Heart left ventricle (tissue), 16 donors: ENCODE measurements at regions of chr17 and their contacts with region 1.

Region 1: DNA sequence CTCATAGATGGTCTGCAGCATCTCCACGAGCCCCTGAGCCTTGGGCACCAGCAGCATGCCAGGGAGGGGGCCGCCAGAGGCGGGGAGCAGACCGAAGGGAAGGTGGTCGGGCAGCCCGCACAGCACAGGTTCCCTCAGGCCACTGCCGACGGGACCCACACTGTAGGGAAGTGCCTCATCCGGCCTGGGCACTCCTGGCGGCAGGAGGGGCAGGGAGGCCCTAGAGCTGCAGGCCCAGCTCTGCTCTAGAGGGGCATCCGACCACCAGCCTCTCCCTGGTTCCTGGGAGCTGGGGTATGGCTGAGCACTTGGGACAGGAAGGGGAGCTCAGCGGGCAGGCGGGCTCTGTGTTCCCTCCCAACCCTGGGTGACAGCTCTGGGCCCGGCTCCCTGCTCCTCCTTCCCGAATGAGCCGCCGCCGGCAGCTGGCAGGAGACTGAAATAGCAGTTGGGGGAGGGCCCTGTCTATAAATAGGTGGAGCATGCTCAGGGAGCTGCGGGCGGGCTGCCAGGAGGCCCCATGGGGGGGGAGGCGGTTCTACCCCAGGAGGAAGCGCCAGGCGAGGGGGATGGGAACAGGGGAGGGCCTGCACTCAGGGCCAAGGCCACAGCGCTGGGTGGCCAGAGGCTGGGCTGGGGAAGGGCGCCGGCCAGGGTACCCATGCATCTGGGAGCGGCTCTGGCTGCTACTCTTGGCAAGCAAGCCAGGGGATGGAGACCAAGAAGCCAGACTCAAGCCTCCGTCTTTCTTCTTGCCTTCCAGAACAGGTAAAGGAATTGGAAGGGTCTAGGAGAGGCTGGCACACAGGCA is 12.4 kb downstream of the HDAC5 start:
- DNase-seq: peak; percentile 99 to 100 (median 100)
- ATAC-seq: peak; percentile 72 to 83 (median 82)
- H3K4me3 ChIP-seq: peak overlapping the region; percentile 43 to 71 (median 56)
- H3K27ac ChIP-seq: peak overlapping the region; percentile 84 to 97 (median 93)
- H3K4me1 ChIP-seq: peaks cover 20 to 99% (median 92%) of the 10 kb centered on the region in 12 donors
- H3K27me3 ChIP-seq: no peaks in the 10 kb centered on the region
- CTCF ChIP-seq: peak in 1 of 12 donors; percentile 19
- POLR2A ChIP-seq: peak; percentile 75 to 95

Region 2: GRCh38 chr17:43940630-43941029 is 170.4 kb before region 1 on chr17:
- intact Hi-C with region 1: loop called in 2 of 10 experiments (anchors 5 to 10 kb)
- DNase-seq: peak in 2 of 5 donors; percentile 38 to 61
- ATAC-seq: peak; percentile 41 to 57 (median 44)
- H3K4me3 ChIP-seq: no peak overlapping the region
- H3K27ac ChIP-seq: no peak overlapping the region
- H3K4me1 ChIP-seq: peaks cover 0 to 11% (median 3%) of the 10 kb centered on the region in 12 donors
- H3K27me3 ChIP-seq: peaks cover 0 to 21% (median 9%) of the 10 kb centered on the region in 9 donors
- CTCF ChIP-seq: peak; percentile 17 to 46 (median 30)
- POLR2A ChIP-seq: no peak

Region 3: GRCh38 chr17:44006598-44007345 is 104.3 kb before region 1 on chr17:
- intact Hi-C with region 1: loop called in 4 of 10 experiments (anchors 5 to 10 kb)
- DNase-seq: peak; percentile 96 to 99 (median 98)
- ATAC-seq: peak; percentile 87 to 94 (median 92)
- H3K4me3 ChIP-seq: peak overlapping the region; percentile 44 to 79 (median 67)
- H3K27ac ChIP-seq: peak overlapping the region in 7 of 12 donors; percentile 6 to 66 (median 42)
- H3K4me1 ChIP-seq: peaks cover 8 to 52% (median 33%) of the 10 kb centered on the region in 12 donors
- H3K27me3 ChIP-seq: peaks cover 13 to 30% (median 22%) of the 10 kb centered on the region in 9 donors
- CTCF ChIP-seq: peak in 11 of 12 donors; percentile 36 to 65 (median 55)
- POLR2A ChIP-seq: peak in 1 of 2 donors; percentile 30

Region 4: GRCh38 chr17:44014437-44015172 is 96.4 kb before region 1 on chr17 and contains the start of gene TMEM101:
- intact Hi-C with region 1: loop called in 4 of 10 experiments (anchors 5 to 10 kb)
- DNase-seq: peak; percentile 91 to 94 (median 93)
- ATAC-seq: peak; percentile 93 to 96 (median 94)
- H3K4me3 ChIP-seq: peak within 1 kb of the TSS; percentile 68 to 97 (median 84)
- H3K27ac ChIP-seq: peak within 1 kb of the TSS in 11 of 12 donors; percentile 63 to 85 (median 79)
- H3K4me1 ChIP-seq: peaks cover 2 to 42% (median 15%) of the 10 kb centered on the region in 12 donors
- H3K27me3 ChIP-seq: no peaks in the 10 kb centered on the region
- CTCF ChIP-seq: peak in 1 of 12 donors; percentile 8
- POLR2A ChIP-seq: peak in 1 of 2 donors; percentile 49
- total RNA-seq, gene TMEM101: 13.4 to 22.1 (median 19.3) TPM

Region 5: DNA sequence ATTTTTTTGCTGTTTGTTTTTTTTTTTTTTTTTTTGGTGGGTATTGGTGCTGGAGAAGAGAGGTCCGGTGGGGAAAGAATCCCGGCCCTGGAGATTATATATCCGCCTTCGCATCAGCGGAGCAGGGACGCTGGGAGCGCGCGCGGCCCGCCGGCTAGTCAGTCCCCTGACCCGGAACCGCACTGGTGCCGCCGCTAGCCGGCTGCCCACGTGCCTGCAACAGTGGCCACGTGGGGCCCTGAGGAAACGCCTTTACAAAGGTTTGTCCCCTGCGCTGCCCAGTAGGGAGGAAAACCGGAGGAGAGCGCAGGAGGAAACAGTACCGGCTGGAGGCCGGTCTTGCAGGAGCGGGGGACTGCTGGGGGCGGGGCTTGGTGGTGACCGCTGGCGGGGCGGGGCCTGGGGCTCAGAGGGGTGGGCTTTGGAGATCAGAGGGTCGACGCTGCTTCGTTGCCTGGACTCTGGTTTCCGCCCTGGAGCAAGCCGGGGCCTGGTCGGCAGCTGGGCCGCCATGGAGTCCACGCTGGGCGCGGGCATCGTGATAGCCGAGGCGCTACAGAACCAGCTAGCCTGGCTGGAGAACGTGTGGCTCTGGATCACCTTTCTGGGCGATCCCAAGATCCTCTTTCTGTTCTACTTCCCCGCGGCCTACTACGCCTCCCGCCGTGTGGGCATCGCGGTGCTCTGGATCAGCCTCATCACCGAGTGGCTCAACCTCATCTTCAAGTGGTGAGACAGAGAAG is 40.4 kb before region 1 on chr17 and contains the start of gene G6PC3:
- intact Hi-C with region 1: loop called in 4 of 10 experiments (anchors 5 kb)
- DNase-seq: peak; percentile 96 to 98 (median 97)
- ATAC-seq: peak; percentile 92 to 96 (median 94)
- H3K4me3 ChIP-seq: peak within 1 kb of the TSS; percentile 32 to 85 (median 74)
- H3K27ac ChIP-seq: peak within 1 kb of the TSS; percentile 18 to 94 (median 90)
- H3K4me1 ChIP-seq: peaks cover 5 to 42% (median 27%) of the 10 kb centered on the region in 12 donors
- H3K27me3 ChIP-seq: no peaks in the 10 kb centered on the region
- CTCF ChIP-seq: peak in 2 of 12 donors; percentile 27 to 38
- POLR2A ChIP-seq: peak in 1 of 2 donors; percentile 67
- total RNA-seq, gene G6PC3: 28.5 to 46.5 (median 36.6) TPM

Region 6: DNA sequence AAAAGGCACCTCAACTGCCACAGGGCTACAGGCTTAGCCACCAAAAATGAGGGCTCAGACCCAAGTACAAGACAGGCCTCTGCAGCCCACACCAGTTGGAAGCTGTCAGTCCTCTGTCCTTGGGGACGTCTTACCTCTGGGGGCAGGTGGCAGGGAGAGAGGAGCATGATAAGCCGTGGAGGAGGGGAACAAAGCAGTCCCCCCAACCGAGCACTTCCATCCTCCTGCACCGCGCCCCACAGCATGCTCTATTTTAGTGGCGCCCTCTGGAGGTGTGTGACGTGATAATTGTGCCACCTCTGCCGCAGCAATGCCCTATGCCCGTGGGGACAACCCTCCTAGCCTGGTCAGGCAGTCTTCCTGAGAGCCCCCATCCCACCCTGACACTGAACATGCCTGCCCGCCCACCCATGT is 26.9 kb before region 1 on chr17:
- intact Hi-C with region 1: loop called in 1 of 10 experiments (anchors 5 kb)
- DNase-seq: no peak
- ATAC-seq: no peak
- H3K4me3 ChIP-seq: no peak overlapping the region
- H3K27ac ChIP-seq: no peak overlapping the region
- H3K4me1 ChIP-seq: peaks cover 0 to 8% (median 0%) of the 10 kb centered on the region in 12 donors
- H3K27me3 ChIP-seq: no peaks in the 10 kb centered on the region
- CTCF ChIP-seq: peak in 7 of 12 donors; percentile 10 to 37 (median 15)
- POLR2A ChIP-seq: no peak

Region 7: GRCh38 chr17:44095642-44096496 is 15.2 kb before region 1 on chr17:
- intact Hi-C with region 1: loop called in 1 of 10 experiments (anchors 1 kb)
- DNase-seq: peak; percentile 77 to 90 (median 86)
- ATAC-seq: peak; percentile 68 to 82 (median 73)
- H3K4me3 ChIP-seq: peak overlapping the region in 10 of 12 donors; percentile 3 to 62 (median 38)
- H3K27ac ChIP-seq: peak overlapping the region; percentile 78 to 98 (median 90)
- H3K4me1 ChIP-seq: peaks cover 5 to 65% (median 50%) of the 10 kb centered on the region in 12 donors
- H3K27me3 ChIP-seq: no peaks in the 10 kb centered on the region
- CTCF ChIP-seq: peak in 8 of 12 donors; percentile 24 to 48 (median 26)
- POLR2A ChIP-seq: no peak